ENCODE measurements at regions of chr22 and their contacts with region 1.

Region 1: GRCh38 chr22:29387921-29388758 is at the start of gene AP1B1:
- DNase-seq: peak; percentile 99
- H3K4me3 ChIP-seq: peak within 1 kb of the TSS; percentile 88
- H3K27ac ChIP-seq: peak within 1 kb of the TSS; percentile 97
- H3K4me1 ChIP-seq: peaks cover 69% of the 10 kb centered on the region
- CTCF ChIP-seq: peak; percentile 17; the same call in 1 of the 2 replicates
- total RNA-seq, gene AP1B1: 84.6 and 111 TPM in 2 replicates

Region 2: DNA sequence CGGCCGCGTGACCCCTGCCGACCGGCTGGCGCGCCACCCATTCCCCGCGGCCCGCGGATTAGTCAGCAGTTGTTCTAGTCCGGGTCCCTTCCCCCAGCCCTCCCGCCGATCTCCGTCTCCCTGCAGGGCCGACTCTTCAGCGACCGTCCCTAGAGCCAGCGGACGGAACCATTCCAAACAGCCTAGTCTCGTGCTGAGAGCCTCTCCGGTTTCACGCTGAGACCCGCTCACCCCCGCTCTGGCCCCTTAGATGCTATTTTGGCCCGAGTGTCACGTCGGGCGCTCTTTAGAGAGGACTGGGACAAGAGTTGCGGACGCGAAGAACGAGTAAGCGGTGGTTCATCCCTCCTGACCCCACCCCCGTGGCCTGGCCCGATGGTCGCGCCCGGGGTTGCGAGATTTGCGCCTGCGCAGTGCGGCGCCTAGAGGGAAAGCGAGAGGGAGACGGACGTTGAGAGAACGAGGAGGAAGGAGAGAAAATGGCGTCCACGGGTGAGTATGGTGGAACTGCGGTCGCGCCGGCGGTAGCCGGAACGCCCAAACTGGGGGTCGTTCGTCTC is 120.2 kb before region 1 on chr22 and contains the starts of genes EWSR1 and RHBDD3:
- CTCF ChIA-PET with region 1: no interaction called
- POLR2A ChIA-PET with region 1: no interaction called
- intact Hi-C with region 1: loop called (anchors 2 kb)
- DNase-seq: peak; percentile 97
- H3K4me3 ChIP-seq: peak within 1 kb of the TSS; percentile 92
- H3K27ac ChIP-seq: peak within 1 kb of the TSS; percentile 75
- H3K4me1 ChIP-seq: peaks cover 34% of the 10 kb centered on the region
- CTCF ChIP-seq: no peak
- total RNA-seq, gene EWSR1: 270 and 311 TPM in 2 replicates
- total RNA-seq, gene RHBDD3: 37.9 and 44.5 TPM in 2 replicates

Region 3: GRCh38 chr22:29346659-29347058 is 41.5 kb before region 1 on chr22:
- CTCF ChIA-PET with region 1: no interaction called
- POLR2A ChIA-PET with region 1: interaction called, 16 read pairs
- intact Hi-C with region 1: no loop called
- DNase-seq: no peak
- H3K4me3 ChIP-seq: peak overlapping the region; percentile 32
- H3K27ac ChIP-seq: peak overlapping the region; percentile 96
- H3K4me1 ChIP-seq: peaks cover 42% of the 10 kb centered on the region
- CTCF ChIP-seq: no peak

Region 4: GRCh38 chr22:29359469-29359868 is 28.7 kb before region 1 on chr22:
- CTCF ChIA-PET with region 1: no interaction called
- POLR2A ChIA-PET with region 1: interaction called, 10 read pairs
- intact Hi-C with region 1: no loop called
- DNase-seq: peak; percentile 37
- H3K4me3 ChIP-seq: no peak overlapping the region
- H3K27ac ChIP-seq: no peak overlapping the region
- H3K4me1 ChIP-seq: peaks cover 18% of the 10 kb centered on the region
- CTCF ChIP-seq: peak; percentile 71

Region 5: DNA sequence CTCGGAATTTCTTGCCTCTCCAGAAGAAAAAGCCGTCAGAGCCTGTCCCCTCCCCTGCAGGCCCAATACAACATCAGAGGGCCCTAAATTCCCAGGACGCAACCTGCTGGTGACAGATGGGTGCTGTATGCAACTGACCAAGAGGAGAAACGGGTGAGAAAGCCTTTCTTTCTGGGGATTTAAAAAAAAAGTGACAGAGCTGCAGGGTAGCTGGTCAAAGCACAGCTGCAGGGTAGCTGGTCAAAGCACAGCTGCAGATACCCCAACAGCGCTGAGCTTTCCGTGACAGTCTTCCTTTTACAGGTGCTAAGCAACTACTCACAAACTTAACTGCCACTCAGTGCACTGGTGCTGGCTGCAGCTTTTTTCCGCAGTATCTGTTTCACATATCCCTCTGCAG is 17.6 kb before region 1 on chr22:
- CTCF ChIA-PET with region 1: interaction called, 3 read pairs
- POLR2A ChIA-PET with region 1: interaction called, 19 read pairs
- intact Hi-C with region 1: loop called (anchors 1 kb)
- DNase-seq: peak; percentile 95
- H3K4me3 ChIP-seq: peak overlapping the region; percentile 51
- H3K27ac ChIP-seq: peak overlapping the region; percentile 94
- H3K4me1 ChIP-seq: peaks cover 89% of the 10 kb centered on the region
- CTCF ChIP-seq: peak; percentile 54

Region 6: GRCh38 chr22:29375398-29376076 is 12.6 kb before region 1 on chr22:
- CTCF ChIA-PET with region 1: interaction called, 3 read pairs
- POLR2A ChIA-PET with region 1: interaction called, 19 read pairs
- intact Hi-C with region 1: loop called (anchors 1 kb)
- DNase-seq: no peak
- H3K4me3 ChIP-seq: no peak overlapping the region
- H3K27ac ChIP-seq: peak overlapping the region; percentile 55
- H3K4me1 ChIP-seq: peaks cover 62% of the 10 kb centered on the region
- CTCF ChIP-seq: no peak

Region 7: GRCh38 chr22:29520851-29521250 is 132.7 kb after region 1 on chr22:
- CTCF ChIA-PET with region 1: no interaction called
- POLR2A ChIA-PET with region 1: no interaction called
- intact Hi-C with region 1: no loop called
- DNase-seq: no peak
- H3K4me3 ChIP-seq: no peak overlapping the region
- H3K27ac ChIP-seq: no peak overlapping the region
- H3K4me1 ChIP-seq: no peaks in the 10 kb centered on the region
- CTCF ChIP-seq: no peak

Region 8: DNA sequence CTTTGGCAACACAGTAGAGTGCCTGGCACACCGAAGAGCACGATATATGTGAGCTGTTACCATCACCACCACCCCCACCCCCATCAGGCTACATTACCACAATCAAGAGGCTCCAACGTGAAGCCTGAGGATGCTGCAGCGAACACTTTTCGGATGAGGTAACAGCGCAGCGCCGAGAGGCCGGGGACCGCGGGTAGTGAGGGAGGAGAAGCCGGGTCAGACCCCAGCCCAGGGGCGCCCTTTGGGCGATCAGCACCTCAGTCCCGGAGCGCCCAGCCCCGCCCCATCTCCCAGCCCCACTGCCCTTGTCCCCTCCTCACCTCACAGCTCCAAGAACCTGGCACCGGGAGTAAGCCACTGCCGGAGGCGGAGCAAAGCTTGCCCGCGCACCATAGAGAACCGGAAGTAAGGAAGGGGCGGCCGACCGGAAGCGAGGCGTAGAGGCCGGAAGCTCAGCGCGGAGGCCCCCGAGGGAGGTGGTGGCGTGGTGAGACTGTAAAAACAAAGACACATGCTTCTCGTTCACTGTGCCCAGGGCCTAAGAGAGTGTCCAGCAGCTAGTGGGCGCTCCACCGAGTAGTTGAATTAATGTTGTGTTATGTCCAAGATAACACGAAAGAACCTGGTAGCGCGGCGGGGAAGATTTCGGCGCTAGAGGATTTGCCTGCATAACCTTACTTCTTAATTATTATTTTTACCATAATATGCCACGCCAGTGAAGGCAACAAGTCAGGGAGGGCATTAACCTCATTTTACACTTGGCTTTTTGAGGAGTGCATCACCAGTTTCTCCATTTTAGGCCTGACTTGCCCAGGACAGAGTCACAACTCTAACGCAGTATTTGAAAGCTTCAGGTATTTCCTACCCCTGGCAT is 165.4 kb after region 1 on chr22 and contains the start of gene THOC5:
- CTCF ChIA-PET with region 1: no interaction called
- POLR2A ChIA-PET with region 1: no interaction called
- intact Hi-C with region 1: no loop called
- DNase-seq: peak; percentile 93
- H3K4me3 ChIP-seq: peak within 1 kb of the TSS; percentile 91
- H3K27ac ChIP-seq: peak within 1 kb of the TSS; percentile 46
- H3K4me1 ChIP-seq: peaks cover 6% of the 10 kb centered on the region
- CTCF ChIP-seq: peak; percentile 74
- total RNA-seq, gene THOC5: 35.9 and 38.5 TPM in 2 replicates